Prostate gland (tissue), 2 donors: ENCODE measurements at regions of chr20 and their contacts with region 1.

Region 1: DNA sequence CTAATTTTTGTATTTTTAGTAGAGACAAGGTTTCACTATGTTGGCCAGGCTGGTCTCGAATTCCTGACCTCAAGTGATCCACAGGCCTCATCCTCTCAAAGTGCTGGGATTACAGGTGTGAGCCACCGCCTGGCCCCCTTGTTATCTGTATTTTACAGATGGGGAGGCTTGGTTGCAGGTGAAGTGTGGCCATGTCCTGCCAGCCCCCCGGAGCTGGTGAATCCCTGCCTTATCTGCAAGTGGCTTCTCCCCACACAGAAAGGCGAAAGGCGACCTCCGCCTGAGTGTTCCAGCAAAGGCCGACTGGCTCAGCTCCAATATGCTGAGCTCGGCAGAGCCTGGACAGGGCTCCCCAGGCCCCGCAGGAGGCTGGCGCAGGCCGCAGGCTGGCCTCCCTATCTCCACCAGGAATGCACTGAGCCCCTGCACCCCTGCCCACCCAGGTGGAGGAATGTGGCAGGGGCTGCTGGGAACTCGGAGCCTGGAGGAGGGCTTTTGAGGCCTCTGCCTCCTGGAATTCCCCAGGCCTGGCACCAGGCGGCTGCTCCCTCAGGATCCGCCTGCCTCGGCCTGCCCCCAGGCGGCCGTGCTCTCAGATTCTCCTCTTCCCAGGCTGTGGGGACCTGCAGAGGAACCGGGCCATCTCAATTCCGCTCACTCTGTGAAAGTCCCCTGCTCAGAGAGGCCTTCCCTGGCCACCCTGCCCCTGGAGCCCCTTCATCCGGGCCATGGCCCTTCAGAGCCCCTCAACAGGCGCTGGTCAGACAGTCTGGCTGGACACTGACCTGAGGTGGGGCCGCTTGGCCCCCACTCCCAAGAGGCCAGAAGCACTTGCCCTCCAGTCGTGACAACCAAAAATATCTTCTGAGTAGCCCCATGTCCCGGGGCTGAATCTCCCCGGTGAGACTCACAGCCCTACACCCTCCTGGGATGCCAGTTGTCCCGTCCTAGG is 9.3 kb upstream of the LAMA5 start:
- DNase-seq: no peak
- H3K4me3 ChIP-seq: no peak overlapping the region
- H3K27ac ChIP-seq: peak overlapping the region; percentile 66 to 77
- H3K4me1 ChIP-seq: peaks cover 21% of the 10 kb centered on the region
- H3K27me3 ChIP-seq: no peaks in the 10 kb centered on the region
- CTCF ChIP-seq: peak in 3 of 4 experiments; percentile 39 to 87 (median 72)
- POLR2A ChIP-seq: no peak

Region 2: GRCh38 chr20:62302341-62303058 is 73.9 kb before region 1 on chr20 and contains the start of gene ADRM1:
- intact Hi-C with region 1: loop called (anchors 2 kb)
- DNase-seq: peak; percentile 95
- H3K4me3 ChIP-seq: peak within 1 kb of the TSS; percentile 84 to 91
- H3K27ac ChIP-seq: peak within 1 kb of the TSS; percentile 98 to 99
- H3K4me1 ChIP-seq: peaks cover 25% of the 10 kb centered on the region
- H3K27me3 ChIP-seq: no peaks in the 10 kb centered on the region
- CTCF ChIP-seq: peak; percentile 95 to 99 (median 98)
- POLR2A ChIP-seq: peak; percentile 57
- total RNA-seq, gene ADRM1: 149 to 207 TPM

Region 3: GRCh38 chr20:62352402-62353288 is 23.7 kb before region 1 on chr20:
- intact Hi-C with region 1: loop called (anchors 2 kb)
- DNase-seq: peak; percentile 93
- H3K4me3 ChIP-seq: no peak overlapping the region
- H3K27ac ChIP-seq: peak overlapping the region; percentile 59 to 62
- H3K4me1 ChIP-seq: peaks cover 50% of the 10 kb centered on the region
- H3K27me3 ChIP-seq: no peaks in the 10 kb centered on the region
- CTCF ChIP-seq: peak in 3 of 4 experiments; percentile 46 to 66 (median 66)
- POLR2A ChIP-seq: peak; percentile 30